Psoas muscle (tissue), 8 donors: ENCODE measurements at regions of chr17 and their contacts with region 1.

Region 1: GRCh38 chr17:4100883-4101756 is 41.7 kb downstream of the ZZEF1 start:
- DNase-seq: no peak
- ATAC-seq: peak in 1 of 4 donors; percentile 12
- H3K4me3 ChIP-seq: no peak overlapping the region
- H3K27ac ChIP-seq: peak overlapping the region; percentile 41
- H3K4me1 ChIP-seq: no peaks in the 10 kb centered on the region
- H3K27me3 ChIP-seq: no peaks in the 10 kb centered on the region
- CTCF ChIP-seq: no peak

Region 2: GRCh38 chr17:4043862-4044261 is 57.3 kb before region 1 on chr17:
- intact Hi-C with region 1: loop called in 1 of 2 experiments (anchors 10 kb)
- DNase-seq: no peak
- ATAC-seq: no peak
- H3K4me3 ChIP-seq: no peak overlapping the region
- H3K27ac ChIP-seq: no peak overlapping the region
- H3K4me1 ChIP-seq: no peaks in the 10 kb centered on the region
- H3K27me3 ChIP-seq: no peaks in the 10 kb centered on the region
- CTCF ChIP-seq: no peak

Region 3: DNA sequence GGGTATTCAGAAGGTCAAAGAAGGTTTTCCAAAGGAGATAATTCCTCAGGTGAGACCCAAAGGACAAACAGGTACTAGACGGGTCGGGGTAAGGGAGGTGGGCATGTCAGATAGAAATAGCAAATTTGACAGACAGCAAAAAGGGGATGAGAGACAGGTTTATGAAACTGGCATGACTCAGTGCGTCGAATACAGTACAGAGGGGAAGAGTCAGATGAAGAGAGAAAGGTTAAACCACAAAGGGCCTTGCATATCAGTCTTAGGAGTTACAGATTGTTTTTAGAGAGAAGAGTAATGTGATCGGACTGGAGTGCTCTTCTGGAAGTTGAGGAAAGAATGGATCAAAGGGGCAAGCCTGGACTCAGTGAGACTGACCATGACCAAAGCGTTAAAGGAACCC is 46.7 kb before region 1 on chr17:
- intact Hi-C with region 1: loop called (anchors 10 kb)
- DNase-seq: no peak
- ATAC-seq: no peak
- H3K4me3 ChIP-seq: no peak overlapping the region
- H3K27ac ChIP-seq: no peak overlapping the region
- H3K4me1 ChIP-seq: no peaks in the 10 kb centered on the region
- H3K27me3 ChIP-seq: no peaks in the 10 kb centered on the region
- CTCF ChIP-seq: no peak